ENCODE measurements at regions of chr12 and their contacts with region 1.

Region 1: DNA sequence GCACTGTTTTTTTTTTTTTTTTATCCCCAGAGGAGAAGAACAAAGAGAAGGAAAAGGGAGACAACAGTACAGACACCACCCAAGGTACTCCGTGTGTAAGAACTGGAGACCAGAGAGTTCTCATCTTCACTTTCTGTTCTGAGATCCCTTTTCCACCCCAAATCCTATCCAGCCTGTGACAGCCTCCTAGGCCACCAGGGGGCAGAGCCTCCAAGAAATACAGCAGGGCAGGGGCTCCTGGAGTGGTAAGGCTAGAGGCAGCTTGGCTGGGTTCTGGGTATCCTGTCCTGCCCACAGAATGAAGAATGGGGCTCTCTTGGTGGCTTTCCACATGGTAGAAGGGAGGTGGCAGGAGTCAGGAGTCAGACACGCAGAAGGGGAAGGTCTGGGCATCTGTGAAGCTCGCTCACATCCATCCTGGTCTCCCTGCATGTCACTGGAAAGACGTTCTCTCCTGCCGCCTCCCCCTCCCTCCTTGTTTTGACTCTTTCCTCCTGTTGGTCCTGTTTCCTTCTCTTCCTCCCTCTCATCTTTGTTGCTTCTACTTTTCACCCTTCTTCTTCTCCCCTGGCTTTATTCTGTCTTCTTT is 12.0 kb downstream of the CLSTN3 start:
- H3K4me3 Mint-ChIP-seq: no peak overlapping the region
- H3K27ac Mint-ChIP-seq: no peak overlapping the region
- H3K4me1 Mint-ChIP-seq: peaks cover 19% of the 10 kb centered on the region
- H3K27me3 Mint-ChIP-seq: peaks cover 2% of the 10 kb centered on the region

Region 2: DNA sequence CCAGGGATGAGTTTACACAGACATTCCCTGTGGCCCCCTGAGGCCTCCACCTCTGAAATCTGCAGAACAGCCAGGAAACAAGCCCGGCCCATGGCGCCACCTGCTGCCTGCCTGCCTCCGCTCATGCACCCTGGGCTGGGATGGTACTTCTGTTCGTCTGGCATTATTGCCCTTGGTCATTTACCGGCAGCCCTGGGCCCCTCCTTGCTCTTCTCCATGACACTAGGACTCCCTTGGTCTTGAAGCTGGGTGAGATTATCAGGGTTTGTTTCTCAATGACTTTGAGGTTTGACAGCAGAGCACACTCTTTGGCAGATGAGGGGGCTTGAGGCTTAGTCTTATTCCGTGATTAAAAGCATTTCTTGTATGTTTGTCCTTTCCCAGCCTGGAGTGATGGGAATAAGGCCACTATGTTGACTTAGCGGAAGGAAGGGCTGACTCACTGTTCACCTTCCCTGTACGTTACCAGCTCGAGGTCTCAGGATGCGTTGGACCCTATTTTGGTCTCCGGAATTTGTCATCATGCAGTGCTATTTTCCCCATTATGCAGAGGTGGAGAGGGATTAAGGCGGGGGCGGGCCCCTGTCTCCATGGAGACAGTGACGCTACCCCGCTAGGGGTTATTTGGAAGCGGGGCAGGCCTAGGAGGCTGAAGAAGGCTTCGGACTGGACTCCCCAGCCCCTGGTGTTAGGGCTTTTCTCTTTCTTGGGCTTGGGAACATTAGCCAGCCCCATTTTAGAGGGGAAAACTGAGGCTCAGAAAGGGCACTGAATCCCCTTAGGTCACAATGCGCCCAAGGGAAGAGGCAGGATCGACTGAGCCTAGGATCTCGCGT is 46.6 kb after region 1 on chr12:
- intact Hi-C with region 1: loop called (anchors 2 kb)
- H3K4me3 Mint-ChIP-seq: peak overlapping the region; percentile 88
- H3K27ac Mint-ChIP-seq: peak overlapping the region; percentile 92
- H3K4me1 Mint-ChIP-seq: peaks cover 41% of the 10 kb centered on the region
- H3K27me3 Mint-ChIP-seq: no peaks in the 10 kb centered on the region